HepG2 (cell line): ENCODE measurements at regions of chr3 and their contacts with region 1.

Region 1: DNA sequence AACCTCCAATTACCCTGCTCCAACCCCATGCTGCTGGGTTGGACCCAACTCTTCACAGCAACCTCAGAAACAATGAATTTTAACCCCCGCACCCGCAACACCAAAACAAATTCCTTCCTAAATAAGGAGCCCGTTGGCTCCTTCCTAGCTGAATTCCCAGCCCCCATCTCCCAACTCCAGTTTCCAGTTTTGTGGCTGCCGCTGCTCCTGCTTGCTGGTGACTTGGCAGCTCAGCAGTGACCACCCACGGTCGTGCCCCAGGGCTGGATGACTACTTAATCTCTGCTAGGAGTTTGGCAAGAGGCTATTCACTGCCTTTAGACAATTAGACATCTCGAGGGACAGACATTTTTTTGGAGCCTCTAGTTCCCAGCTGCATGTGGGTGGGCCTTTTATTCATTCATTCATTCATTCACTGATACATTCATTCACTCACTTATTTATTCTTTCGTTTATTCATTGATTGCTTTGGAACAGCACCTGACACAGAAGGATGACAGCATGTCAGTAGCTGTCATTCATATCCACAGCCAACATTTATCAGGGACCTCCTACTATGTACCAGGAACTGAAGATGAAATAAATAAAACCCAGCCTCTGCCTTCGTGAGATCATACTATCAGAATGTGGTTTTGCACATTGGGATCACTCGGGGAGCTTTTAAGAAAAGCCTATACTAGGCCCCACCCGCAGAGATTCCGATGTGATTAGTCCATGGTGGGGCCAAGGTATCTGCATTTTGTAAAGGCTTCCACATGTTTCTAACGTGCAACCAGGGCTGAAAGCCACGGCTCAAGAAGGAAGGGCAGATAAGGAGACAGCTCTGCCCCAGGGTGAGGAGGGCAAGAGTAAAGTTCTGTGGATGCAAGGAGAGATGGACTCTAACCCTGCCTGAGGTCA is 256.5 kb downstream of the SHQ1 start:
- DNase-seq: no peak
- ATAC-seq: no peak
- H3K4me3 ChIP-seq: peak overlapping the region in 1 of 3 experiments; percentile 56; a peak in 1 of 6 replicates
- H3K27ac ChIP-seq: peak overlapping the region; percentile 91
- H3K4me1 ChIP-seq: peaks cover 90% of the 10 kb centered on the region
- H3K27me3 ChIP-seq: no peaks in the 10 kb centered on the region
- CTCF ChIP-seq: no peak
- EP300 ChIP-seq: no peak
- POLR2A ChIP-seq: no peak
- RAD21 ChIP-seq: no peak

Region 2: GRCh38 chr3:72447059-72447946 is 144.5 kb before region 1 on chr3:
- CTCF ChIA-PET with region 1: no interaction called
- POLR2A ChIA-PET with region 1: interaction called, 4 read pairs
- in situ Hi-C with region 1: no loop called
- intact Hi-C with region 1: loop called (anchors 5 kb)
- DNase-seq: peak; percentile 66
- ATAC-seq: peak; percentile 71
- H3K4me3 ChIP-seq: peak overlapping the region; percentile 92 to 94 (median 93); a peak in 4 of 6 replicates
- H3K27ac ChIP-seq: peak overlapping the region; percentile 84
- H3K4me1 ChIP-seq: peaks cover 64% of the 10 kb centered on the region
- H3K27me3 ChIP-seq: peaks cover 0 to 2% of the 10 kb centered on the region in 2 experiments; a peak in 1 of 5 replicates
- CTCF ChIP-seq: no peak
- EP300 ChIP-seq: no peak
- POLR2A ChIP-seq: no peak; a peak in 1 of 4 replicates
- RAD21 ChIP-seq: peak; percentile 75

Region 3: DNA sequence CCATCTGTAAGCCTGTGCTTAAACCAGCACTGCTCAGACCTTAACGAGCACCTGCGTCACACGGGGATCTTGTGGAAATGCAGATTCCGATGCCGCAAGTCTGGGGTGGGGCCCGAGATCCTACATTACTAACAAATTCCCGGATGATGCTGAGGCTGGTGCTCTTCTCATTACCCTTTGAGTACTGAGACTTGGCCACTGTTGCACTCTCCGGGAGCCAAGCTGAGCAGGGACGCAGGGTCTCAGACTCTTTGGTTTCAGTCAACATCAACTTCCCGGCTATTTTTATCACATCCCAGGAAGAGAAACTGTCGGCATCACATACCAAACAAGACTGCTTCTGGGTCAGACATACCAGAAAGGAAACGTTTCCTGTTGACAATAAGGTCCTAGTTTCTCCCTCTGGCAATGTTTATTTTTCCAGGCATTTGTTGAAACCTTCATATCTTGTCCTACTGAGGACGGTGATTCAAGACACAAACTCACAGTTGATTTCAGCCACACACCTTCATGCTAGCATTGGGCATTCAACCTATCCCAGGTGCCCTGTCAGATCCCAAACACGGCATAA is 20.0 kb before region 1 on chr3:
- CTCF ChIA-PET with region 1: no interaction called
- POLR2A ChIA-PET with region 1: interaction called, 26 read pairs
- in situ Hi-C with region 1: no loop called
- intact Hi-C with region 1: loop called (anchors 1 kb)
- DNase-seq: peak; percentile 82
- ATAC-seq: peak; percentile 56
- H3K4me3 ChIP-seq: peak overlapping the region; percentile 49 to 73 (median 54)
- H3K27ac ChIP-seq: peak overlapping the region; percentile 89
- H3K4me1 ChIP-seq: peaks cover 97% of the 10 kb centered on the region
- H3K27me3 ChIP-seq: no peaks in the 10 kb centered on the region
- CTCF ChIP-seq: no peak
- EP300 ChIP-seq: peak in 1 of 2 experiments; percentile 79; a peak in 1 of 4 replicates
- POLR2A ChIP-seq: no peak
- RAD21 ChIP-seq: no peak

Region 4: GRCh38 chr3:72606005-72606800 is 14.4 kb after region 1 on chr3:
- CTCF ChIA-PET with region 1: no interaction called
- POLR2A ChIA-PET with region 1: interaction called, 15 read pairs
- in situ Hi-C with region 1: no loop called
- intact Hi-C with region 1: no loop called
- DNase-seq: peak; percentile 65
- ATAC-seq: peak; percentile 96
- H3K4me3 ChIP-seq: no peak overlapping the region
- H3K27ac ChIP-seq: no peak overlapping the region
- H3K4me1 ChIP-seq: peaks cover 28% of the 10 kb centered on the region
- H3K27me3 ChIP-seq: no peaks in the 10 kb centered on the region
- CTCF ChIP-seq: no peak
- EP300 ChIP-seq: no peak
- POLR2A ChIP-seq: no peak
- RAD21 ChIP-seq: no peak

Region 5: GRCh38 chr3:72629191-72629631 is 37.4 kb after region 1 on chr3:
- CTCF ChIA-PET with region 1: no interaction called
- POLR2A ChIA-PET with region 1: no interaction called
- in situ Hi-C with region 1: no loop called
- intact Hi-C with region 1: no loop called
- DNase-seq: no peak
- ATAC-seq: no peak
- H3K4me3 ChIP-seq: no peak overlapping the region
- H3K27ac ChIP-seq: no peak overlapping the region
- H3K4me1 ChIP-seq: peaks cover 22% of the 10 kb centered on the region
- H3K27me3 ChIP-seq: peaks cover 0 to 4% of the 10 kb centered on the region in 2 experiments; a peak in 1 of 5 replicates
- CTCF ChIP-seq: no peak
- EP300 ChIP-seq: no peak
- POLR2A ChIP-seq: no peak
- RAD21 ChIP-seq: no peak